Right ventricle myocardium inferior (tissue), 1 donor: ENCODE measurements at regions of chr13 and their contacts with region 1.

Region 1: DNA sequence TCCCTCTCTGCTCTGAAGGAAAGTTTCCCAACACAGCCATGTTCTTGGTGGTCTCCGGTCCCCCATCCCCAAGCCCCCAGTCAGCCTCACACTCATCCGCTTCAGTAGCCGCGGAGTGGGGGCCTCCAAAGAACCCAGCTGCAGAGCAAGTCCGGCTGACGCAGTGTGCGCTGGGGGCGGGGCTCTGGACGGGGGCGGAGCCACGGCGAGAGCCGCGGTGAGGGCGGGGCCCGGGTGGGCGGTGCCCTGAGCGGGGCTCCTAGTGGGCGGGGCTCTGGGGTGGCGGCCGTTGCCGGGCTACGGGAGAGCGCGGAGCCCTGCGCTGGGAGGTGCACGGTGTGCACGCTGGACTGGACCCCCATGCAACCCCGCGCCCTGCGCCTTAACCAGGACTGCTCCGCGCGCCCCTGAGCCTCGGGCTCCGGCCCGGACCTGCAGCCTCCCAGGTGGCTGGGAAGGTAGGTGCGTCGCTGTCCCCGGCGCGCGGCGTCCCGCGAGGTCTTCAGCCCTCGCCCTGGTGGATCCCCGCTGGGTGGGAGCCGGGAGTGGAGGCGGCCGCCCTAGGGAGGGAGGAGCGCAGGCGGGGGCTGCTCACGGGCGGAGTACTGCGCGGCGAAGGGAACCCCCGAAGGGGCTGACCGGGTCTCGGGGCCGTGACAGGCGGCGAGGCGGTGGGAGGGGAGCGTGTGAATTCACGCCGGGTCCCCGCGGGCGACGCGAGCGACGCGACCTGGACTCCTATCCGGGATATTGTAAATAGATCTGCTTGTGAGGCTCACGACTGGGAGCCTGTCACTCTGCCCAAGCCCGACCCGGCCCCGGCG is 9.1 kb downstream of the TNFRSF19 start:
- DNase-seq: peak; percentile 96
- ATAC-seq: peak; percentile 99

Region 2: GRCh38 chr13:23375001-23375971 is 204.0 kb before region 1 on chr13:
- intact Hi-C with region 1: loop called (anchors 5 kb)
- DNase-seq: peak; percentile 99
- ATAC-seq: peak; percentile 98

Region 3: GRCh38 chr13:23506807-23507291 is 72.4 kb before region 1 on chr13:
- intact Hi-C with region 1: no loop called
- DNase-seq: no peak
- ATAC-seq: peak; percentile 39

Region 4: DNA sequence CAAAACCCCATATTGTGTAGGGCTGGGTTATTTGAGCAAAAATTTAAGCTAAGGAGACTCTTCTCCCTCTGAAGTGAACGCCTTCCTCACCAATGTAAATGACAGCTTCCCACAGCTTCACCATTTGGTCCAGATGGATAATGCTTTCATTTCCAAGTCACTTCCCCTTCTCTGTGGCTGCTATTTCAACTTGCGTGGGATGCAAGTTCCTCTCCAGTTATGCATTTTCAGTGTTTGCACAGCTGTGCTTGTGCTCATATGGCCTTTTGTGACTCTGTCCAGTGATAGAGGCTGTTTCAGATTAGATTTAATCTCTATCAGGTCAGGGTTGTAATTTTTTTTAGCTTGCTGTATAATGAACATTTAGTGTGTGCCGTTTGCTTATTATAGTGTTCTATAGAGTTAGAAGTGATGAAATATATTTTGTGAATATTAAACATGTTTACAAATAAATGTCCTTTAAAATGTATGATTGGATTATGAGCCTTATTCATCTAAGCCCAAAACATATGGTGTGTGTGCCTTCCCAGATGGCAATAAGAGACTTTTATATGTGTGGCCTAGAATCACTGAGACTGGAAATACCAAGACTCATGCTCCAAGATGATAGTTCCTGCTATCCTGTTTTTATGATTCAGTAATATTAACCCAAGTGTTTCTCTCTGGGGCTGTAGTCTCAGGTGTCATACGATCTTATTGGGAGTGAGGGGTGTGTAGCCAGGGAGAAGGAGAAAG is 77.5 kb after region 1 on chr13:
- intact Hi-C with region 1: loop called (anchors 5 kb)
- DNase-seq: no peak
- ATAC-seq: peak; percentile 70

Region 5: DNA sequence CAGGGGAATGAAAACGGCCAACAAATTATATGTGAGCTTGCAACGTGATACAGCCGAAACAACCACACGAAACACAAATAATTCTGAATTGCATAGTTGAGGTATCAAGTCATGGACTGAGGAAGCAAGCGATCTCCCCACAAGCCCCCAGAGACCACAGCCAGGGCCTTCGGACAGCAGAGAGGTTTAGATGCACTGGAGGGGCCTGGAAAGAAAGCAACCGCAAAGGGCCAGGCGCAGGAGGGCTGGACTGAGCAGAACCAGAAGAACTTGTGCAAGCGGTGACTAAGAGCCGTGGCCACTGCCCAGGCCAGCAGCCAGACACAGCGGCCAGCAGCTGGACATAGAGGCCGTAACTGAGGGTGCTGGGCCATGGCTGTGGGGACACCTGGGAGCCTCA is 122.4 kb after region 1 on chr13:
- intact Hi-C with region 1: loop called (anchors 5 kb)
- DNase-seq: peak; percentile 92
- ATAC-seq: peak; percentile 96

Region 6: DNA sequence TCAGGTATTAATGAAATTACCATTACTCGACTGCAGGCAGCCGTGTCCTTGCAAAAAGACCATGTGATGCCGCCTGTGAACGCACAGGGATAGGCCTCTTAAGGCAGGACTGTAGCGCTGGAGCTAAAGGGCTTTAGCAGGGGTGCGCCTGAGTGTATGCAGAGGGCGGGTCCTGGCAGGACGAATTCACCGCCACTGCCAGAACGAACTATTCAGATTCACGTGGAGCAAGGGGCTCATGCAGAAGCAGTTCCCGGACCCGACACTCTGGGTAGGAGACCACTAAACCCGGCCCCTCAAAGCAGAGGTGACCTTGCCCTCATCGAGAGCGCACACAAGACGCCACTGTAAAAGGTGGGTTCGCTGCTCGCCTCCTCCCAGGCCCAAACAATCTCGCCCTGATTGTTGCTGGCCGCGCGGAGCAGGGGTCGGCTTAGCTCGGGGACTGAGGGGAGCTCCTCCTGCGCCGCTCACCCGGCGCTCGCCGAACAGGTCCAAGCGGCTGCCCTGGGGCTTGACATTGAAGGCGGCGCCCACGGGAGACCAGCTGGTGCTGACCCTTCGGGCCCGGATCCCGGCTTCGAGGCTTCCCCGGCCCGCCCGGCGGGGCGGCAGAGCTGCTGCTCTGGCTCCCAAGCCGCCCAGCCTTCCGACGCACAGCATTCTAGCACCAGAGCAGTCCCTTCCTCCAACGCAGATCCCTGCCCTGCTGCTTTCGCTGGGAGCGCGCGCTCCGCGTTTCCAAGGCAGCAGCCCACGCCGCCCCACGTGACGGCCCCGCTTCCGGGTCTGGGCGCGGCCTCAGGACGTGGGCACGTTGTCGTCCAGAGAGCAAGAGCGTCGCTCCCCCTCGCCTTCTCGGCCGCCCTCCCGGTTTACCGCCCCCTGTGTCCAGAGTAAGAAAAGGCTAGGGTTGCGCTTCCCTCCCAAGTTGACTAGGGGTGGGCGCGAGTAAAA is 309.7 kb after region 1 on chr13 and contains the start of gene MIPEP:
- intact Hi-C with region 1: loop called (anchors 5 kb)
- DNase-seq: peak; percentile 96
- ATAC-seq: peak; percentile 99
- total RNA-seq, gene MIPEP: 37.7 TPM